ENCODE measurements at regions of chr6 and their contacts with region 1.

Region 1: GRCh38 chr6:139375232-139376016 is 976 bp upstream of the CITED2 start:
- DNase-seq: peak; percentile 97
- H3K4me3 ChIP-seq: peak overlapping the region; percentile 87
- H3K27ac ChIP-seq: peak overlapping the region; percentile 96
- H3K4me1 ChIP-seq: peaks cover 10% of the 10 kb centered on the region
- H3K27me3 ChIP-seq: no peaks in the 10 kb centered on the region
- CTCF ChIP-seq: peak; percentile 38; the same call in 1 of the 2 replicates

Region 2: GRCh38 chr6:139250296-139251044 is 125.0 kb before region 1 on chr6:
- CTCF ChIA-PET with region 1: no interaction called
- POLR2A ChIA-PET with region 1: no interaction called
- intact Hi-C with region 1: no loop called
- DNase-seq: peak; percentile 70
- H3K4me3 ChIP-seq: no peak overlapping the region
- H3K27ac ChIP-seq: no peak overlapping the region
- H3K4me1 ChIP-seq: no peaks in the 10 kb centered on the region
- H3K27me3 ChIP-seq: no peaks in the 10 kb centered on the region
- CTCF ChIP-seq: peak; percentile 68

Region 3: DNA sequence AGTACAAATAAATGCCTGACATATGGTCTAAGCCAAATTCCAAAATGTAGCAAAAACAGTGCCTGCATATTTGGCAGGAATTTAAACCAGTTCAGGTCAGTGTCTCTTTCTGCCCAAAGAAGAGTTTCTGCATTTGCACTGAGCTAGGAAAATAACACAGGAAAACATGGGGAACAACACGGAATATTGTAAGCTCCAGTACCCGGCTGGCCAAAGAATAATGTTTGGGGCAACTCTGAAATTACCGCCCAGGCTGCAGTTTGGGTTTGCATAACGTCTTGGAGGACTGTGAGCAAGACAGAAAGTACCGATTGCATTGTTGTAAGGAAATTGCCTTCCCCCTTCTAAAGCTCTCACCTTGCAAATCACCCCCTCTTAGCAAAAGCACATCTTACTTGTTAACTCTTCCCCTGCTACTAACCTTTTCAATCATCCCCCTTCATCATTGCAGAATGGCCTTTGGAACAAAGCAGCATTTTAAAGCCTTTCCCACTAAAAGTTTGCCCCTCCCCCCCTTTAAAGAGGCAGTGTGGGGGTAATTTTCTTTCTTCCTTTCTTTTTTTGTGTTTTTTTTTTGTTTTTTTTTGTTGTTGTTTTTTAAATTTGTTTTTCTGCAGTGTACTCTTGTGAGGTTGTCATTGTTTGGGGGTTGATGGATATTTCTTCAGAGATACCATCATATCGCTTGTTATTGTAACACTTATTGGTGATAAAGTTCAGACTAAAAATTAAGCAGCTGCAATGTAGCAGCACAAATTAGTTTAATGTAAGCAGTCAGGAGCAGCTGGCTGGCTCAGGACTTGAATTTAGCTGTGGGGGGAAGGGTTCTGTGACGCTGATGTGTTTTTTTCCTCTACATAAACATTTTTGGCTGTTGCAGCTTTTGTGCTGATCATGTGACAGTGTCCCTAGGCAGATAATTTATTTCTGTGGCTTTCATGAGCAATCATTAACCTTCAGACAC is 99.0 kb after region 1 on chr6:
- CTCF ChIA-PET with region 1: interaction called, 4 read pairs
- POLR2A ChIA-PET with region 1: interaction called, 5 read pairs
- intact Hi-C with region 1: loop called (anchors 5 kb)
- DNase-seq: peak; percentile 73
- H3K4me3 ChIP-seq: peak overlapping the region; percentile 26
- H3K27ac ChIP-seq: peak overlapping the region; percentile 75
- H3K4me1 ChIP-seq: peaks cover 40% of the 10 kb centered on the region
- H3K27me3 ChIP-seq: no peaks in the 10 kb centered on the region
- CTCF ChIP-seq: no peak

Region 4: GRCh38 chr6:139522511-139523220 is 147.2 kb after region 1 on chr6:
- CTCF ChIA-PET with region 1: interaction called, 4 read pairs
- POLR2A ChIA-PET with region 1: interaction called, 4 read pairs
- intact Hi-C with region 1: loop called (anchors 1 kb)
- DNase-seq: peak; percentile 52
- H3K4me3 ChIP-seq: no peak overlapping the region
- H3K27ac ChIP-seq: peak overlapping the region; percentile 94
- H3K4me1 ChIP-seq: peaks cover 35% of the 10 kb centered on the region
- H3K27me3 ChIP-seq: no peaks in the 10 kb centered on the region
- CTCF ChIP-seq: no peak

Region 5: GRCh38 chr6:139547111-139547776 is 171.8 kb after region 1 on chr6:
- CTCF ChIA-PET with region 1: no interaction called
- POLR2A ChIA-PET with region 1: interaction called, 5 read pairs
- intact Hi-C with region 1: loop called (anchors 2 kb)
- DNase-seq: peak; percentile 96
- H3K4me3 ChIP-seq: peak overlapping the region; percentile 16
- H3K27ac ChIP-seq: peak overlapping the region; percentile 93
- H3K4me1 ChIP-seq: peaks cover 48% of the 10 kb centered on the region
- H3K27me3 ChIP-seq: no peaks in the 10 kb centered on the region
- CTCF ChIP-seq: no peak

Region 6: DNA sequence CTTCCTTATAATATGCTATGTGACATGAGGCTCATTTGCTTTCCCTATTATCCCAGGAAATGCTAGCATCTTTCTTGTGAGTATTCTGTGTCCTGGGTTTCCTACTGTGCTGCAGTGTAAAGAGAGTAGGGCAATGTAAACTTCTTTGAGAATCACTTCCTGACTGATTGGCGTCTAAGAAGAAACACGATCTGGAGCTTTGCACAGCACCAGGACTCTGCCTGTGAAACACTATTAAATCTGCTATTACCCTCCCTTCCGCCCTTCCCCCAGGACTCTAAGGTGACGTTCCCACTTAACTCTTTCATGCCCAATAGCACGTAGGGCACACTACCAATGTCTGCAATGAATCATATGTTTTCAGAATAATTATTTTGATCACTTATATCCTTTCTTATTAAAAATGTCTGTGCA is 606.4 kb after region 1 on chr6:
- CTCF ChIA-PET with region 1: no interaction called
- POLR2A ChIA-PET with region 1: interaction called, 5 read pairs
- intact Hi-C with region 1: loop called (anchors 2 kb)
- DNase-seq: peak; percentile 97
- H3K4me3 ChIP-seq: peak overlapping the region; percentile 11
- H3K27ac ChIP-seq: peak overlapping the region; percentile 89
- H3K4me1 ChIP-seq: peaks cover 53% of the 10 kb centered on the region
- H3K27me3 ChIP-seq: no peaks in the 10 kb centered on the region
- CTCF ChIP-seq: no peak

Region 7: GRCh38 chr6:140921366-140922226 is 1546.2 kb after region 1 on chr6:
- CTCF ChIA-PET with region 1: no interaction called
- POLR2A ChIA-PET with region 1: no interaction called
- intact Hi-C with region 1: loop called (anchors 10 kb)
- DNase-seq: peak; percentile 84
- H3K4me3 ChIP-seq: no peak overlapping the region
- H3K27ac ChIP-seq: peak overlapping the region; percentile 24
- H3K4me1 ChIP-seq: peaks cover 10% of the 10 kb centered on the region
- H3K27me3 ChIP-seq: no peaks in the 10 kb centered on the region
- CTCF ChIP-seq: peak; percentile 84